ENCODE measurements at regions of chr9 and their contacts with region 1.

Region 1: DNA sequence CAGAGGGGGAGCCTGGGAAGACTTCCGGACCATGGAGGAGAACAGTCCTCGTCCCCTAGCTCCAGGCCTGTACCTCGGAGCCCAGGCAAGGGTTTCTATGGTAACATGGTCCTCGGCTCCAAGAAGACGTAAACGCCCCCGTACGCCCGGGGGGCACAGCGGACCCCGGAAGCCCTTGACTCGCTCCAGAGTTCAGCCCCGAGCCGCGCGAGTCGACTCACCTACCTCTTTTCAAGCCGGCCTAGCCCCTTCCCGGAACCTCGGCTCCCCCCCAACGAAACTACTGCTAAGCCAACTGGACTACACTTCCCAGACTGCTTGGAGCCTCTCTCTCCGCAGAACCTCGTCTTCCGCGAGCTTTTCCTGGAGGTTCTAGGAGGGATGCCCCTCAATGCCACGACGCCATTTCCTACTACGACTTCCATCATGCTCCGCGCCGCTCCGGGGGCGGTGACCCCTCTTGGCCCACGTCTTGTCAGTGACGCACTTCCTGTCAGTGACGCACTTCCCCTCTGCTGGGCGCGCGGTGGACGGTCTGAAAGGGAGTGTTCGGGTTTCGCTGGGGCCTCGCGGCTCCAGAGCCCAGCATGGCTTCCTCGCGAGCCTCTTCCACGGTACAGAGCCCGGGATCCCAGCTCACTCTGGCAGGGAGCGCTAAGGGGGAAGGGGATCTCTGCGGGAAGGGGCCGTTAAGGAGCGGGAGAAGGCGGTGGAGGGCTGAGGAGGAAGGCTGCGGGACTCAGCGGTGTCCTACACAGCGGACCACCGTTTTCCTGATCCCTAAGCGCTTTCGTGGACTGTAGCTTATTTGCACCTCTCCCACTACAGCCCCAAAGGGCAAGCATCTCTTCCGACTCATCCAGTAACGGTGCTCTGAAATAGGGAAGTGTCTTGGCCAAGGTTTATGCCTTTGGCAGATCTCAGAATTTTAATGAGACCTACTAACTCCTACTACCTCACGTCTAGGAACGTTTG is at the starts of genes CDC26 and PRPF4:
- DNase-seq: peak; percentile 97
- ATAC-seq: peak; percentile 95
- H3K4me3 Mint-ChIP-seq: no peak within 1 kb of the TSS
- H3K27ac Mint-ChIP-seq: no peak within 1 kb of the TSS
- H3K4me1 Mint-ChIP-seq: peaks cover 7% of the 10 kb centered on the region
- H3K27me3 Mint-ChIP-seq: no peaks in the 10 kb centered on the region
- CTCF ChIP-seq: no peak
- total RNA-seq, gene CDC26: 36.9 to 39.8 TPM (median 37.0 TPM) in 3 replicates
- total RNA-seq, gene PRPF4: 29.0 to 32.4 TPM (median 30.4 TPM) in 3 replicates

Region 2: DNA sequence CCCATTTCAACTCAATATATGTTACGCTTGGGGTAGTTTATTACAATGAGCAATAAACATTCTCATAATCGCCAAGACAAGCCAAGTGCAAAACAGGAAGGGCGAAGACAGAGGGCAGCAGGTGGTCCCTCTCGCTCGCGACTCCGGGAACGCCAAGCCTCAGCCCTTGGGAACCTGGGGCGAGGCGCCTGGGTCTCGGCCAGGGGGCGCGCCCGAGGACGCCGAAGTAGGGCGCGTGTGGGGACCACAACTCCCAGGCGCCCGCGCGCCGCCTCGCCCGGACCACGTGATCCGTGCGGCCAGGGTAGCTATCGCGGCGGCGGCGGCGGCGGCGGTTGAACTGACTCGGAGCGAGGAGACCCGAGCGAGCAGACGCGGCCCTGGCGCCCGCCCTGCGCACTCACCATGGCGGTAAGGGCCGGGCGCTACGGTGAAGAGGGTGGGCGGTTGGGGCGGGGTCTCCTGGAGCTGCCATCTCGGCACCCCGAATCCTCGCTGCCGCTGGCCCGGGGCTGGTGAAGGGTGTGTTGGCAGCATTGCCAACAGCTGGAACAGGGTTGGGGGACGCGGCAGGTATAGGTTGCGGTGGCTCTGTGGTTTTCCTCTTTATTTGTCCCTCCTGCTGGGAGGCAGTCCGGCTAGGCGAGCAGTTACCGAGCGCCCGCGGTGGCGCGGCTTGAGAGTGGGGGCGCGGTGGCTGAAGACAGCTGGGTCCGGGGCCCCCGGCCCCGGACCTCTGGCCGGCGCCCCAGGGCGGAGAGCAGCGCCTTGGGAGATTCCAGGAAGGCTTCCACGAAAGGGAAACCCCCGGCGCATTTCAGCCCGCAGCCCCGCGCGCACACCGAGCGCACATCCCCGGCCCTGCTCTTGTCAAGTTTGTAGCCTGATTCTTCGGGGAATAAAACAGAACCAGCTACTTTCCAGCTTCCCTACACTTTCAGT is 124.5 kb before region 1 on chr9 and contains the start of gene SLC31A2:
- CTCF ChIA-PET with region 1: interaction called, 10 read pairs
- POLR2A ChIA-PET with region 1: interaction called, 4 read pairs
- DNase-seq: peak; percentile 93
- ATAC-seq: peak; percentile 93
- H3K4me3 Mint-ChIP-seq: peak within 1 kb of the TSS; percentile 72
- H3K27ac Mint-ChIP-seq: no peak within 1 kb of the TSS
- H3K4me1 Mint-ChIP-seq: peaks cover 11% of the 10 kb centered on the region
- H3K27me3 Mint-ChIP-seq: peaks cover 22% of the 10 kb centered on the region
- CTCF ChIP-seq: no peak
- total RNA-seq, gene SLC31A2: 1.7 to 2.0 TPM (median 1.8 TPM) in 3 replicates

Region 3: GRCh38 chr9:113221003-113221799 is 54.2 kb before region 1 on chr9 and contains the starts of genes FKBP15 and SLC31A1:
- CTCF ChIA-PET with region 1: interaction called, 24 read pairs
- POLR2A ChIA-PET with region 1: interaction called, 6 read pairs
- DNase-seq: peak; percentile 99
- ATAC-seq: peak; percentile 98
- H3K4me3 Mint-ChIP-seq: peak within 1 kb of the TSS; percentile 98
- H3K27ac Mint-ChIP-seq: peak within 1 kb of the TSS; percentile 96
- H3K4me1 Mint-ChIP-seq: peaks cover 26% of the 10 kb centered on the region
- H3K27me3 Mint-ChIP-seq: no peaks in the 10 kb centered on the region
- CTCF ChIP-seq: no peak
- total RNA-seq, gene FKBP15: 13.5 to 14.9 TPM (median 13.9 TPM) in 3 replicates
- total RNA-seq, gene SLC31A1: 41.6 to 43.9 TPM (median 43.6 TPM) in 3 replicates

Region 4: GRCh38 chr9:113299800-113300292 is 24.4 kb after region 1 on chr9:
- CTCF ChIA-PET with region 1: interaction called, 12 read pairs
- POLR2A ChIA-PET with region 1: interaction called, 5 read pairs
- DNase-seq: no peak
- ATAC-seq: no peak
- H3K4me3 Mint-ChIP-seq: no peak overlapping the region
- H3K27ac Mint-ChIP-seq: no peak overlapping the region
- H3K4me1 Mint-ChIP-seq: peaks cover 5% of the 10 kb centered on the region; the same call in 1 of the 2 replicates
- H3K27me3 Mint-ChIP-seq: no peaks in the 10 kb centered on the region
- CTCF ChIP-seq: no peak

Region 5: DNA sequence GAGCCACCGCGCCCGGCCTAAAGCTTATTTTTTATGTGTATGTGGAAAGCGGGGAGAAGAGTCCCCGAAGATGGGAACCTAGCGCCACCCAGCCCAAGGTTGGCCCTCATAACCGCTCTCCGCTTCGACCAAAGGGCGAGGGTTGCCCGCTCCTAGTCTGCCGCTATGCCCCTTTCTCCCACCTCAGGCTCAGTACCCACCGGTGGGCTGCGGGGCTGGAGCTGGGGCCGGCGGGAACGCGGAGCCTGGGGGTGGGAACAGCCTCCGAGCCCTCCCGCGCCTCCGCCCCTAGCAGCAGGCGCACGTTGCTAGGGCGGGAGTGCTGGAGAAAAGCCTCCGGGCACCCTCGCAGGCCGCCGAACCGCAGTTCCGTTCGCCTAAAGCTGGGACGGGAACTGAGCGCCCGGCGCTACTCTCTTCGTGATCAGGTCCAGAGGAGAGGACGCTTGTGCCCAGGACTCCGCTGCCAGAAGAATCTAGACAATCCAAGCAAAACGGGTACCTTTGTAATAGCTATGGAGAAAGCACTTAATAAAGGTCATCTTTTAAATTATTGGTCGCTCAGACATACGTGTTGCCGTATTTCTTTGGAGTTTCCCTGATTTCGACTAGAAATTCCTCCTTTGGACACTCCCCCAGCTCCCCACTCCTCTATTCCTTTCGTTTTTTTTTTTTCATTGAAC is 64.7 kb after region 1 on chr9 and contains the start of gene WDR31:
- CTCF ChIA-PET with region 1: interaction called, 17 read pairs
- POLR2A ChIA-PET with region 1: interaction called, 11 read pairs
- DNase-seq: peak; percentile 86
- ATAC-seq: peak; percentile 98
- H3K4me3 Mint-ChIP-seq: peak within 1 kb of the TSS; percentile 77
- H3K27ac Mint-ChIP-seq: no peak within 1 kb of the TSS
- H3K4me1 Mint-ChIP-seq: peaks cover 5% of the 10 kb centered on the region
- H3K27me3 Mint-ChIP-seq: peaks cover 48% of the 10 kb centered on the region
- CTCF ChIP-seq: no peak
- total RNA-seq, gene WDR31: 0.37 to 0.71 TPM (median 0.46 TPM) in 3 replicates

Region 6: GRCh38 chr9:113401027-113401792 is 125.8 kb after region 1 on chr9 and contains the start of gene ALAD:
- CTCF ChIA-PET with region 1: interaction called, 12 read pairs
- POLR2A ChIA-PET with region 1: interaction called, 3 read pairs
- DNase-seq: peak; percentile 100
- ATAC-seq: peak; percentile 97
- H3K4me3 Mint-ChIP-seq: peak within 1 kb of the TSS; percentile 85
- H3K27ac Mint-ChIP-seq: peak within 1 kb of the TSS; percentile 91
- H3K4me1 Mint-ChIP-seq: peaks cover 14% of the 10 kb centered on the region
- H3K27me3 Mint-ChIP-seq: no peaks in the 10 kb centered on the region
- CTCF ChIP-seq: peak; percentile 75
- total RNA-seq, gene ALAD: 14.7 to 15.9 TPM (median 15.5 TPM) in 3 replicates

Region 7: DNA sequence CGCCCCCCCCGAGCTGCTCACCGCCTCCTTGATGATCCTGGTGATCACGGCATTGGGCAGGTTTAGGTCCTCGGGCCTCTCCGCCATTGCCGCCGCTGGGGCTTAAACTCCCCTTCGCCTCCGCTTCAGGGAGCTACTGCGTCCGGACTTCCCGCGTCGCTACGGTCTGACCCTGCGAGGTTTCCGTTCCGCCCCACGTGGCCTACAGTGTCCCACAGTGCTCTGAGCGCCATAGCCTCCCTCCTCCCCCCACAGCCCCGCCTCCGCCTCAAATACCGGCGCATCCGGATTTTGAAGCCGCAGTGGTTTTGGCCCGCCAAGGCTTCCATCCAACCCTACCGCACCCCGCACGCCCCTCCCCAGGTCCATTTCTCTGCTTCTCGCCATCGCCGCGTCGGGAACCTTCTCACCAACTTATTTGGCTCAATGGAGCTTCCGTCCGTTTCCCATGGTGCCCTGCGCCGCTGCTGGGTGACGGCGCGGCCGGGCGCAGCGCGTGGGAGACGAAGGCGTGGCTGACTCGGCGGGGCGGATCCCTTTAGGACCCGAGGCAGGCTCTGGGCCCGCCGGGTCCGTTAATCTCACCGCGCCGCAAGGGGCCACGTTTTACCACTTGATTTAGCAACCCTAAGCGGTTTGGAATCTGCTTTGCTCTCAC is 134.9 kb after region 1 on chr9 and contains the starts of genes C9orf43 and POLE3:
- CTCF ChIA-PET with region 1: interaction called, 10 read pairs
- POLR2A ChIA-PET with region 1: interaction called, 5 read pairs
- DNase-seq: peak; percentile 90
- ATAC-seq: peak; percentile 90
- H3K4me3 Mint-ChIP-seq: peak within 1 kb of the TSS; percentile 87
- H3K27ac Mint-ChIP-seq: peak within 1 kb of the TSS; percentile 99
- H3K4me1 Mint-ChIP-seq: peaks cover 18% of the 10 kb centered on the region
- H3K27me3 Mint-ChIP-seq: no peaks in the 10 kb centered on the region
- CTCF ChIP-seq: no peak
- total RNA-seq, gene C9orf43: 0.28 to 0.46 TPM (median 0.30 TPM) in 3 replicates
- total RNA-seq, gene POLE3: 39.7 to 43.6 TPM (median 42.4 TPM) in 3 replicates

Region 8: GRCh38 chr9:113602126-113603044 is 326.9 kb after region 1 on chr9:
- CTCF ChIA-PET with region 1: no interaction called
- POLR2A ChIA-PET with region 1: no interaction called
- DNase-seq: peak; percentile 76
- ATAC-seq: peak; percentile 81
- H3K4me3 Mint-ChIP-seq: no peak overlapping the region
- H3K27ac Mint-ChIP-seq: peak overlapping the region; percentile 72; the same call in 1 of the 2 replicates
- H3K4me1 Mint-ChIP-seq: peaks cover 37% of the 10 kb centered on the region
- H3K27me3 Mint-ChIP-seq: peaks cover 2% of the 10 kb centered on the region
- CTCF ChIP-seq: no peak